Naive thymus-derived CD4-positive, alpha-beta T cell (primary cell): ENCODE measurements at regions of chr19 and their contacts with region 1.

Region 1: GRCh38 chr19:51422053-51422448 is 4.6 kb upstream of the SIGLEC10 start:
- DNase-seq: peak; percentile 41 to 96 (median 61)
- ATAC-seq: peak; percentile 90
- H3K4me3 ChIP-seq: no peak overlapping the region
- H3K4me3 Mint-ChIP-seq: peak overlapping the region in 3 of 10 donors; percentile 4 to 12 (median 8)
- H3K27ac ChIP-seq: no peak overlapping the region
- H3K27ac Mint-ChIP-seq: peak overlapping the region in 1 of 9 donors; percentile 2
- H3K4me1 ChIP-seq: no peaks in the 10 kb centered on the region
- H3K4me1 Mint-ChIP-seq: peaks cover 0 to 11% (median 0%) of the 10 kb centered on the region in 7 donors
- H3K27me3 ChIP-seq: no peaks in the 10 kb centered on the region
- H3K27me3 Mint-ChIP-seq: peaks cover 19 to 40% (median 31%) of the 10 kb centered on the region in 5 donors

Region 2: DNA sequence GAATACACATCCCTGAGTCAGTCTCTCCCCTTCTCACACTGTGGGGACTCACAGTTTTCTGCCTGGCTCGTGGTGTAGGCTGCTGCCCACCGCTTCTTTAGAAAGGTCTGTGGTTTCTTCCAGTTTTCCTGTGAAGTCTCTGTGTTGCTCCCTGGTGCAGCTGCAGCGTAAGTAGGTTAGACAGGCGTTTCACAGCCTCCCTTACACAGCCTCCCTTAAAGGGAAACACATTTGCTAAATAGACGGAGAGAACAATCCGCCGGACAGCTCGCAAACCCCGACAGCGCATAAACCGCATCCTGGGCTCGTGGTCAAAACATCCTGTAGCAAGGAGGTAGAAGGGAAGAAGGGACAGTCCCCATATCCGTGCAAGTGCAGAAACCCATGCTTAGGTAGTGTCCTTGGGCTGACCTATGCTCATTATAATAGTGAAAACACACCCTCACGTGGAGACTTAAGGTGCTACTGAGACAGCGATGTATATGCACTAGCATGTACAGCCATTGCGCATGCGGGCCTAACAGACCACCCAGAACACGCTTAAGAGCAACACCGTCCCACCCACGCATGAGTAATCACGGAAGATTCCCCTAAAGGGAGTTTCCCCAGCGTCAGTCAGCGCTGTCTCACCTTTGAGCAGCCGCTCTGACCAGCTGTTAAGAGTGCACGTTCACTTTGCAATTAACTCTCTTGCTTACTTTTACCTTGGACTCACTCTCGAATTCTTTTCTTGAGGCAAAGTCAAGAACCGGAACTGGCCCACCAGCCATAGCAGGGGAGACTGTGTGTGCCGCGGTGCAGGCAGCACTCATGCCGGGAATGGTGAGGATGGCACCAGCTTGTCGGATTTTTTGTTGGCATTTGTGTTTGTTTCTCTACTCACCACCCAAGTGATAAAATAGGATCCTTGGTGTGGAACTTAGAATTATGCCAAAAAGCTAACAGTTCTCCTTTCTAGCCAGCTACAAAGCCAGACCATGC is 19.6 kb after region 1 on chr19:
- CTCF ChIA-PET with region 1: interaction called, 36 read pairs
- POLR2A ChIA-PET with region 1: no interaction called
- intact Hi-C with region 1: loop called (anchors 1 kb)
- DNase-seq: peak; percentile 27 to 87 (median 68)
- ATAC-seq: peak; percentile 91
- H3K4me3 ChIP-seq: peak overlapping the region; percentile 31
- H3K4me3 Mint-ChIP-seq: peak overlapping the region; percentile 74 to 92 (median 83)
- H3K27ac ChIP-seq: peak overlapping the region; percentile 53
- H3K27ac Mint-ChIP-seq: peak overlapping the region; percentile 49 to 88 (median 77)
- H3K4me1 ChIP-seq: peaks cover 22 to 24% of the 10 kb centered on the region in 2 donors
- H3K4me1 Mint-ChIP-seq: peaks cover 22 to 43% (median 34%) of the 10 kb centered on the region in 7 donors
- H3K27me3 ChIP-seq: peaks cover 0 to 4% of the 10 kb centered on the region in 2 donors
- H3K27me3 Mint-ChIP-seq: peaks cover 0 to 59% (median 5%) of the 10 kb centered on the region in 5 donors

Region 3: GRCh38 chr19:51514866-51515481 is 92.9 kb after region 1 on chr19:
- CTCF ChIA-PET with region 1: interaction called, 11 read pairs
- POLR2A ChIA-PET with region 1: no interaction called
- intact Hi-C with region 1: loop called in 1 of 2 experiments (anchors 1 kb)
- DNase-seq: peak in 6 of 9 donors; percentile 2 to 48 (median 36)
- ATAC-seq: no peak
- H3K4me3 ChIP-seq: no peak overlapping the region
- H3K4me3 Mint-ChIP-seq: no peak overlapping the region
- H3K27ac ChIP-seq: no peak overlapping the region
- H3K27ac Mint-ChIP-seq: peak overlapping the region in 1 of 9 donors; percentile 27
- H3K4me1 ChIP-seq: no peaks in the 10 kb centered on the region
- H3K4me1 Mint-ChIP-seq: peaks cover 0 to under 1% (median 0%) of the 10 kb centered on the region in 7 donors
- H3K27me3 ChIP-seq: no peaks in the 10 kb centered on the region
- H3K27me3 Mint-ChIP-seq: peaks cover 28 to 60% (median 35%) of the 10 kb centered on the region in 5 donors

Region 4: DNA sequence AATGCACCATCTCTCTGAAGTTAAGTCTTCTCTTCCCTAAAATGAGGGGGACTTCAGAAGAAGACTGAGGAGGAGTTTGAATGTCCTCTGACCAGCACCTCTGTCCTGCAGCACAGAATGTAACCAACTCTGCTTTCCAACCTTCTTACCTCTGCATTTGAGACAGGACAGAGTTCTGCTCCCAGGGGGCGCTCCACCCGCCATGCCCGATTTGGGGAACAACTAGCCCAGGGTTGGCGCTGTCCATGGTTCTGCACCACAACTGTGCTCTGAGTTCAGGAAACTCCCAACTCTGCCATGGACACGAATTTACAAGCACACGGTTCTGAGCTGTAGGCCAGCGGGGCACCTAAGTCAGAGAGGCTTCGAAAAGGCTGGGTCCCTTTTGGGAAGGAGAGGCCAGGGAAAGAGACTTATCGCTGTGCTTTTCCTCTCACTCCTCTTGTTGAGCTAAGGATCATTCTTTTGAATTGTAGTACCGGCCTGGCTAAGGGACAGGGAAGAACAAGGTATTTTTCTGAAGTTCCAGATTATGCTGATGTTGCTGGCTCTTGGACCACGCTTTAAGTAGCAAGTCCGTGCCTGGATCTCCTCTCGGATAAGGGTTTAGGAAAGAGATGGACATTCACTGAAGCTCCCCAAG is 186.0 kb after region 1 on chr19:
- CTCF ChIA-PET with region 1: no interaction called
- POLR2A ChIA-PET with region 1: no interaction called
- intact Hi-C with region 1: loop called in 1 of 2 experiments (anchors 5 kb)
- DNase-seq: peak in 8 of 9 donors; percentile 19 to 75 (median 36)
- ATAC-seq: peak; percentile 88
- H3K4me3 ChIP-seq: no peak overlapping the region
- H3K4me3 Mint-ChIP-seq: no peak overlapping the region
- H3K27ac ChIP-seq: no peak overlapping the region
- H3K27ac Mint-ChIP-seq: no peak overlapping the region
- H3K4me1 ChIP-seq: no peaks in the 10 kb centered on the region
- H3K4me1 Mint-ChIP-seq: peaks cover 0 to 5% (median 0%) of the 10 kb centered on the region in 7 donors
- H3K27me3 ChIP-seq: no peaks in the 10 kb centered on the region
- H3K27me3 Mint-ChIP-seq: peaks cover 6 to 60% (median 52%) of the 10 kb centered on the region in 5 donors

Region 5: DNA sequence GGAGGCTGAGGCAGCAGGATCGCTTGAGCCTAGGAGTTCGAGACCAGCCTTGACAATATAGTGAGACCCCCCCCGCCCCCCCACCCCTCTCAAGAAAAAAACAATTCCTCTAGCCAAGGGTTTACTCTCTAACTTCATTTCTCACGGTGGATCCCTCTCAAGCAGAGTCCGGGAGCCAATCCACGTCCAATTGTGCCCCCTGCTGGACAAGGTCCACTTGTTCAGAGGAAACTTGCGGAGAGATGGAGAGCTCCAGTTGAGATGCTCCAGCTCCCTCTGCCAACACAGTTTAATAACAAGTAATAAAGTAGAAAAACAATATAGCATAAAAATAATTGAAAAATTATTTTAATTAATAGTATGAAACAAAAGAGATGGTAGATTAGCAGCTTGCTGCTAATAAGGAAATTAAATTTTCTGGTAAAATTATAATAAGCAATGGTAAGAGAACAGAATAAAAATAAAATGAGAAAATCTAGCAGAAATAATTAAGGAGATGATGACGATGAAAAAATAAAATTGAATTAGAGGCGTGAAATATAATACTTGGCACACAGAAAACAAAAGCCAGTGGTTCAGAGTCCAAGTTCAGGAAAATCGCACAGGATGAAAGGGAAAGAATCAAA is 239.0 kb after region 1 on chr19:
- CTCF ChIA-PET with region 1: interaction called, 4 read pairs
- POLR2A ChIA-PET with region 1: no interaction called
- intact Hi-C with region 1: loop called in 1 of 2 experiments (anchors 1 kb)
- DNase-seq: peak in 8 of 9 donors; percentile 7 to 52 (median 29)
- ATAC-seq: peak; percentile 60
- H3K4me3 ChIP-seq: no peak overlapping the region
- H3K4me3 Mint-ChIP-seq: no peak overlapping the region
- H3K27ac ChIP-seq: no peak overlapping the region
- H3K27ac Mint-ChIP-seq: no peak overlapping the region
- H3K4me1 ChIP-seq: no peaks in the 10 kb centered on the region
- H3K4me1 Mint-ChIP-seq: peaks cover 4 to 8% (median 7%) of the 10 kb centered on the region in 7 donors
- H3K27me3 ChIP-seq: peaks cover 0 to 6% of the 10 kb centered on the region in 2 donors
- H3K27me3 Mint-ChIP-seq: peaks cover 17 to 34% (median 28%) of the 10 kb centered on the region in 5 donors